MCF 10A (cell line): ENCODE measurements at regions of chr19 and their contacts with region 1.

Region 1: DNA sequence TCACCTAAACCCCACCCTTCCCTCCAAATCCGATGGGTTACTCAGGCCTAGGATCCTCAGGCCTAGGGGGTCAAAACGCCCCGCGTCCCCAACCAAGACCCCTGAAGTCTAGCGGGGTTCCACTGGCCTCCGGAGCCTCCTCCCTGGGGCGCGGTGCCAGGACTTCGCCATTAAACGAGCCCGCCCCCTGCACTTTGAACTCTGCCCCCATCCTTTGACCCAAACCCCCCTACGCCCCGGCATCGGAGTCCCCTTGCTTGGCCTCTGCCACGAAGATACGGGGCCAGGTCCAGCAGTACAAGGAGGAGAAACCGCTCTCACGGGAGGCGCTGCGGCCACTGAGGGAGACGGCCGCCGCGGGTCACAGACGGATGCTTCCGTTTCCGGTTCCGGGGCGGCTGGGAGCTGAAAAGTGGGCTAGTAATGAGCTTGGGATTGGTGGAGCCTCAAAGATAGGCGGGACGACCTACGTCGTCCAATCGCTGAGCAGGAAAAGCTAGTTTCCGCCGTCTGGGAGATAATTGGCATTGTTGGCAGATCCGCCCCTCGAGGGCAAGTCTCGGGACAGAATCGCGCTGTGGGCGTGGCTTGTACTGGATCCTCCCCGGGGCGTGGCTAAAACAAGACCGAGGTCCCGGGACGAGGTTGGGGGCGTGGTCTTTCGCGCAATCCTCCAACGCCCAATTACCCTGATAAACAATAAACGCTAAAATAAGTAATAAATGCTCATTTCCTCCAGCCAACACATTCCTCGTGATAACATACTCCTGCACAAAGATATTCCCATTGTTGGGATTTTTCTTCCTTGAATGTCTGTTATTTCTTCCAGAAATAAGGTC is 5.7 kb upstream of the ZNF77 start:
- DNase-seq: peak; percentile 100
- H3K4me3 Mint-ChIP-seq: peak overlapping the region; percentile 96
- H3K27ac Mint-ChIP-seq: peak overlapping the region; percentile 99
- H3K4me1 Mint-ChIP-seq: peaks cover 16% of the 10 kb centered on the region
- H3K27me3 Mint-ChIP-seq: no peaks in the 10 kb centered on the region
- CTCF ChIP-seq: no peak

Region 2: DNA sequence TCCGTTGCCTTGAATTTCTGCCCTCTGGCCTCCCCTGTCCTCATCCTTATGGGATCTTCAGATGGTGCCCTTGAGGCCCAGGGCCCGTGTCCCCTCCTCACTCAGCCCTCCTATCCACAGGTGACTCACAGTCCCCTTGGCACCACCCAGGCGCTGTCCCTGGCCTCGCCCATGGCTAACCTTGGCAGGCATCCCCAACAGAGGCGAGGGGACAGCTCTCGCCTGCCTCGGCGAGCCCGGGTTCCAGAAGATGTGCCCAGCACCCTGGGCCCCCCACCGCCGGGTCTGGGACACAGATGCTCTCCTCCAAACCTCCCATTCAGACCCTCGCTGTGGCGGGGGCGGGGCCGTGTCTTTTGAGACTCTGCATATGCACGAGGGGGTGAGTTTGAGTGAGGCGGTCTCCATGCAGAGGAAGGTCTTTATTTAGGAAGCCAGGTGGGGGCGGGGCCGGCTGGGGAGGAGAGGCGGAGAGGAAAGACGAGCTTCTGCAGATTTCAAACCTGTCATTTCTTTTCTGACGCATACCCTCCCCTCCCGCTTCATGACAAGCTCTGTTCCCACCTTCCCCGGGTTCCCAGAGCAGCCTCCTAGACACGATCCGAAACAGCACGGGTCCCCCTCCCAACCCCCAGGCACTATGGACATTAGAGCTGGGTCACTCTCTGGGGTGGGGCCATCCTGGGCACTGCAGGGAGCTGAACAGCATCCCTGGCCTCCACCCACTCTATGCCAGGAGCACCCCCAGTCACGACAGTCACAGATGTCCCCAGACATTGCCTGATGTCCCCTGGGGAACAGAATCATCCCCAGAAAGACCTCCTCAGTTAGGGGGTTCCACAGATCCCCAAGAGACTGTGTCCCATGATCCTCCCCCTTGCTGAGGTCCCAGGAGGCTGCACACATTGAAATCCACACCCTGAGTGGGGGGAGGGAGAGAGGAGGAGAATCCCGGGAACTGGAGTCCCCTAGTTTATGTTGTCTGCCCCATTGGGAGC is 296.5 kb before region 1 on chr19:
- CTCF ChIA-PET with region 1: interaction called, 9 read pairs
- POLR2A ChIA-PET with region 1: no interaction called
- intact Hi-C with region 1: loop called (anchors 5 kb)
- DNase-seq: no peak
- H3K4me3 Mint-ChIP-seq: no peak overlapping the region
- H3K27ac Mint-ChIP-seq: no peak overlapping the region
- H3K4me1 Mint-ChIP-seq: peaks cover 9% of the 10 kb centered on the region
- H3K27me3 Mint-ChIP-seq: peaks cover 28% of the 10 kb centered on the region
- CTCF ChIP-seq: no peak

Region 3: DNA sequence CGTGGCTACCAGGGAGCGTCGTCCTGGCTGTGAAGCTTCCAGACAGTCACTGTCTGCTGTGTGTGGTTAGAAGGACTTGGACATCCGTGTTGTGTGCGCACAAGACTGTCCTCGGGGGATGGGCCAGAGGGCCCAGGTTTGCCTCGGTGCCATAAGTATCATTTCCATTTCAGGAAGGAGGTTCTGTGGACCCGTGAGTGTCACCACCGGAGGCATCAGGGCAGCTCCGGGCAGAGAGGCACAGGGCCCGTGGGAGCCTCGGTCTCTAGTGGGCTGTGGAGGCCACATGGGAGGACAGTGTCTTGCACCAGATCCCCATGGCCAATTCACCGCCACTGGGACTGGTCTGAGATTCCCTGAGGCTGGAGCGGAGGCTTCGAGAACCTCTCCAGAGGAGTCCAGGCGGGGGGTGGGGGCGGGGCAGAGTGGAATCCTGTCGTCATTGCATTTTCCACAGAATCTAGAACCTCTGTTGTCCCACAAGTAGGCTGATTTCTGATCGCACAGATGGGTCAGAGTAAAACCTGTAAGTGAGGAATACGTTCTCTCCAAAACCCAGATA is 43.8 kb before region 1 on chr19:
- CTCF ChIA-PET with region 1: interaction called, 5 read pairs
- POLR2A ChIA-PET with region 1: interaction called, 37 read pairs
- intact Hi-C with region 1: no loop called
- DNase-seq: no peak
- H3K4me3 Mint-ChIP-seq: no peak overlapping the region
- H3K27ac Mint-ChIP-seq: no peak overlapping the region
- H3K4me1 Mint-ChIP-seq: peaks cover 31% of the 10 kb centered on the region
- H3K27me3 Mint-ChIP-seq: no peaks in the 10 kb centered on the region
- CTCF ChIP-seq: no peak

Region 4: DNA sequence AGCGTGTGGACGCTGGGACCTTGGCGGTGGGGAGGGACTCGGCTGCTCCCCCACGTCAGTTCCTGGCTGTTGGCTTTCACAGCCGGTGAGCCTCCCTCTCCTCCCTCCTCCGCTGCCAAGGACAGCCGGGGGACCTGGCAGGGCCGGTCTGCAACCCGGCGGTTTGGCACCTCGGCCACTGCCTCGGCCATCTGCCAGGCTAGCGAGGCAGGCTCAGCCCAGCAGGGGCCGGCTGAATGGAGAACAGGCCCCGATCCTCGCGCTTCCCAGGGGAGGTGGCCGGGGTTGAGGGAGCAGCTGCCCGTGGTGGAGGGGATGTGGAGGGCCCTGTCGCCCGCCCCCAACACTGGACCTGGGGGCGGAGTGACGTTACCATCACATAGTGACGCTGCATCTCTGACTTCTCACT is 106.8 kb after region 1 on chr19:
- CTCF ChIA-PET with region 1: interaction called, 3 read pairs
- POLR2A ChIA-PET with region 1: interaction called, 38 read pairs
- intact Hi-C with region 1: no loop called
- DNase-seq: peak; percentile 93
- H3K4me3 Mint-ChIP-seq: peak overlapping the region; percentile 65
- H3K27ac Mint-ChIP-seq: peak overlapping the region; percentile 46
- H3K4me1 Mint-ChIP-seq: peaks cover 39% of the 10 kb centered on the region
- H3K27me3 Mint-ChIP-seq: no peaks in the 10 kb centered on the region
- CTCF ChIP-seq: no peak

Region 5: DNA sequence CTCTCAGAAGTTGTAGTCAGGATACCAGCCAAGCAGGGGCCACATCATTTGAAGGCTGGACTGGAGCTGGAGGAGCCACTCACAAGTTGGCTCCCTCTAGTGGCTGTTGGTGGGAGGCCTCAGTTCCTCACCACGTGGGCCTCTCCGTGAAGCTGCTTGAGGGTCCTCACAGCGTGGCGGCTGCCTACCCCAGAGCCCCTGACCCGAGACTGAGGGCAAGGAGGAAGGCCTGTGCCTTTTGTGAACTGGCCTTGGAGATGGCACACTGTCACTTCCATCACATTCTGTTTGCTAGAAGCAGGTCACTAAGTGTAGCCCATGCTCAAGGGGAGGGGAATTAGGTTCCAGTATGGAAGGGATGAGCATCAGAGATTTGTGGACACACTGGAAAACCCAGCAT is 158.3 kb after region 1 on chr19:
- CTCF ChIA-PET with region 1: interaction called, 29 read pairs
- POLR2A ChIA-PET with region 1: interaction called, 6 read pairs
- intact Hi-C with region 1: no loop called
- DNase-seq: peak; percentile 67
- H3K4me3 Mint-ChIP-seq: no peak overlapping the region
- H3K27ac Mint-ChIP-seq: peak overlapping the region; percentile 53
- H3K4me1 Mint-ChIP-seq: peaks cover 6% of the 10 kb centered on the region
- H3K27me3 Mint-ChIP-seq: no peaks in the 10 kb centered on the region
- CTCF ChIP-seq: peak; percentile 92

Region 6: GRCh38 chr19:3163230-3163886 is 212.9 kb after region 1 on chr19:
- CTCF ChIA-PET with region 1: interaction called, 8 read pairs
- POLR2A ChIA-PET with region 1: interaction called, 4 read pairs
- intact Hi-C with region 1: loop called (anchors 5 kb)
- DNase-seq: peak; percentile 66
- H3K4me3 Mint-ChIP-seq: no peak overlapping the region
- H3K27ac Mint-ChIP-seq: no peak overlapping the region
- H3K4me1 Mint-ChIP-seq: peaks cover 5% of the 10 kb centered on the region
- H3K27me3 Mint-ChIP-seq: no peaks in the 10 kb centered on the region
- CTCF ChIP-seq: peak; percentile 93